ENCODE measurements at regions of chr22 and their contacts with region 1.

Region 1: DNA sequence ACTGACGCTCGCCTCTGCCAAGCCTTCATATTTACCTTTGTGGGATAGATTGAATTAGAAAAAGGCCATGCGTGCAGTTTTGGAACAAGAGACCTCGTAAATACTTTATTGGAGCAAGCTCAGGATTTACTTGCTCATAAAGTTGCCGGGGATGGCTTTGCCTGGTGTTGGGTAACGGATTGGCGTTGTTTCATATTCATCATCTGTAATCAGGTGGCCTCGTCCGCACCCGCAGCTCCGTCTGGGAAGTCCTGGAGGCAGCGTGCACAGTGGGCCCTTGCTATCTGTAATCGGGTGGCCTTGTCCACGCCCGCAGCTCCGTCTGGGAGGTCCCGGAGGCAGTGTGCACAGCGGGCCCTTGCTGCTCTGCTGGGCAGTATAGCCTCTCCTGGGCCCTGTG is 1209.3 kb downstream of the BRD1 start:
- DNase-seq: no peak
- ATAC-seq: no peak
- H3K4me3 ChIP-seq: no peak overlapping the region
- H3K27ac ChIP-seq: no peak overlapping the region
- H3K4me1 ChIP-seq: no peaks in the 10 kb centered on the region
- H3K27me3 ChIP-seq: no peaks in the 10 kb centered on the region
- CTCF ChIP-seq: no peak

Region 2: GRCh38 chr22:48428474-48429371 is 189.6 kb before region 1 on chr22:
- intact Hi-C with region 1: no loop called
- DNase-seq: peak in 1 of 6 donors; percentile 17
- ATAC-seq: peak in 1 of 4 donors; percentile 31
- H3K4me3 ChIP-seq: no peak overlapping the region
- H3K27ac ChIP-seq: no peak overlapping the region
- H3K4me1 ChIP-seq: no peaks in the 10 kb centered on the region
- H3K27me3 ChIP-seq: no peaks in the 10 kb centered on the region
- CTCF ChIP-seq: no peak

Region 3: GRCh38 chr22:48536541-48537342 is 81.6 kb before region 1 on chr22:
- intact Hi-C with region 1: no loop called
- DNase-seq: peak in 4 of 6 donors; percentile 26 to 70 (median 68)
- ATAC-seq: peak; percentile 77 to 86 (median 84)
- H3K4me3 ChIP-seq: peak overlapping the region in 1 of 4 donors; percentile 12
- H3K27ac ChIP-seq: peak overlapping the region; percentile 73 to 88 (median 78)
- H3K4me1 ChIP-seq: no peaks in the 10 kb centered on the region
- H3K27me3 ChIP-seq: no peaks in the 10 kb centered on the region
- CTCF ChIP-seq: no peak

Region 4: DNA sequence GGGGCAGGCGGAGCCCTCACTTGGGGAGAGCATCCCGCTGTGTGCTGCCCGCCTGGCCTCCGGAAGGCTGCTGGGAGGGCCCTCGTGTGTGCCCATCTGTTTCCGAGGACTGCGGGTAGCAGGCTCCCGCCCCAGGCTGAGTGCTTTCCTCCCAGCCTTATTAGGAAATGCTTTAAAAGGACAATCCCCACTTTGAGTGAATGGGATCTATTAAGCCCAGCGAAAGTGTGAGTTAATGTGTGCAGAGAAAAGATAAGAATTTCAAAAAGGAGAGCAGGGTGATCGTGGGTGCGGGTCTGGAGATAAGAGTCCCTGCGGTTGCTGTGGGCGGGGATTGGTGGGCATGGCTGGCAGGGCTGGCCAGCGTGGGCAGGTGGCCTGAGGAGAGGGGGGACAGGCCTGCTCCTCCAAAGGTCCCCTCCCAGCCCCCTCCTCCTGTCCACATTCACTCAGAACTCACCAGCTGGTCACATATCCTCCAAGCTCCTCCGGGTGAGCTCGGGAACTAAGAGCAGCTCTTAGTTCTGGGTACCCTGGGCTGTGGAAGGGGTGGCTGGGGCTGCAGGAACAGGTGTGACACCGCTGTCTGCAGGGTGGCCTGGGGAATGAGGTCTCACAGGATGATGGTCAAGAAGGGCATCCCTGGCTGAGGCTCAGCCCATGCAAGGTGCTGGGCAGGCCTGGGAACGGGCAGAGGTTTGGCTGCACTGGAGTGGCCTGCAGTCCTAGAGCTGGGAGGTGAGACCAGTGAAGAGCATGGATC is 50.9 kb before region 1 on chr22:
- intact Hi-C with region 1: loop called in 1 of 3 experiments (anchors 5 kb)
- DNase-seq: peak in 1 of 6 donors; percentile 35
- ATAC-seq: peak in 1 of 4 donors; percentile 36
- H3K4me3 ChIP-seq: no peak overlapping the region
- H3K27ac ChIP-seq: no peak overlapping the region
- H3K4me1 ChIP-seq: no peaks in the 10 kb centered on the region
- H3K27me3 ChIP-seq: no peaks in the 10 kb centered on the region
- CTCF ChIP-seq: no peak